Activated B cell treated with CpG ODN at 0.5 μM for 24 hours (primary cell): ENCODE measurements at regions of chr11 and their contacts with region 1.

Region 1: GRCh38 chr11:9748361-9748970 is 84.6 kb downstream of the SWAP70 start:
- DNase-seq: peak; percentile 46
- ATAC-seq: peak; percentile 83
- H3K4me3 Mint-ChIP-seq: peak overlapping the region; percentile 53
- H3K27ac Mint-ChIP-seq: peak overlapping the region; percentile 77
- H3K4me1 Mint-ChIP-seq: peaks cover 65% of the 10 kb centered on the region
- H3K27me3 Mint-ChIP-seq: no peaks in the 10 kb centered on the region
- CTCF ChIP-seq: peak; percentile 76

Region 2: DNA sequence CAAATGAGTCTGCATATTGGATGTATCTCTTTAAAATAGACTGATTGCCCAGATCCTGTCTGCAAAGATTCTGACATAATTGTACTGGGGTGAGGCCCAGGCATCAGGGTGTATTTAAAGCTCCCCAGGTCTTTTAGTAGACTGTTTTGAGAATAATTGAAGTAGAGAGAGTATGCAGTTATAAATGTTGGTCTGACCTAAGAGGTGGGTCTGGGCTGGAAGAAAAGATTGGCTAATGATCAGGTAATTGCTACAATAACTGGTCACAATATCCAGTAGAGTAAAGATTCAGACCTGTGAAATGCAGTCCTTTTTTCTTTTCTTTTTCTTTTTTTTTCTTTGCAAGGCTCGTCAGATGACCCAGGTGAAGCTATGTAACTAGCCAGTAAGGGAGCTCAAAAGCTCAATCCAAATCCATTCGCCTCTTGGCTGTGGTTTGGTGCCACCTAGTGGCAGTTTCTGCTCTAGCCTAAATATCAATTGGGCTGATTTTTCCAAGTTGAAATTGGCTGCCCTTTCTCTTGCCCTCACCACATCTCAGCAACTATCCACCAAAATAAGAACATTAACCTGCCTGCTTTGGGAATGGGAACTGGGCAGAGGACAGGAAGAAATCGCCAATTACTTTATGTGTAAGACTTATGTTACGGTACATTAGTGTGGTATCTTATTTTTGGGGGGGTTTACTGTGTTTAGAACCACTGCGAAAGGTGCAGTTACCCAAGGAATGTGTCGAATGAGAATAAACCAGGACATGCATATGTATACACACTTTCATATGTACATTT is 241.8 kb before region 1 on chr11:
- CTCF ChIA-PET with region 1: interaction called, 27 read pairs
- POLR2A ChIA-PET with region 1: no interaction called
- intact Hi-C with region 1: no loop called
- DNase-seq: peak; percentile 42
- ATAC-seq: peak; percentile 80
- H3K4me3 Mint-ChIP-seq: no peak overlapping the region
- H3K27ac Mint-ChIP-seq: no peak overlapping the region
- H3K4me1 Mint-ChIP-seq: peaks cover 16% of the 10 kb centered on the region
- H3K27me3 Mint-ChIP-seq: no peaks in the 10 kb centered on the region
- CTCF ChIP-seq: peak; percentile 71

Region 3: DNA sequence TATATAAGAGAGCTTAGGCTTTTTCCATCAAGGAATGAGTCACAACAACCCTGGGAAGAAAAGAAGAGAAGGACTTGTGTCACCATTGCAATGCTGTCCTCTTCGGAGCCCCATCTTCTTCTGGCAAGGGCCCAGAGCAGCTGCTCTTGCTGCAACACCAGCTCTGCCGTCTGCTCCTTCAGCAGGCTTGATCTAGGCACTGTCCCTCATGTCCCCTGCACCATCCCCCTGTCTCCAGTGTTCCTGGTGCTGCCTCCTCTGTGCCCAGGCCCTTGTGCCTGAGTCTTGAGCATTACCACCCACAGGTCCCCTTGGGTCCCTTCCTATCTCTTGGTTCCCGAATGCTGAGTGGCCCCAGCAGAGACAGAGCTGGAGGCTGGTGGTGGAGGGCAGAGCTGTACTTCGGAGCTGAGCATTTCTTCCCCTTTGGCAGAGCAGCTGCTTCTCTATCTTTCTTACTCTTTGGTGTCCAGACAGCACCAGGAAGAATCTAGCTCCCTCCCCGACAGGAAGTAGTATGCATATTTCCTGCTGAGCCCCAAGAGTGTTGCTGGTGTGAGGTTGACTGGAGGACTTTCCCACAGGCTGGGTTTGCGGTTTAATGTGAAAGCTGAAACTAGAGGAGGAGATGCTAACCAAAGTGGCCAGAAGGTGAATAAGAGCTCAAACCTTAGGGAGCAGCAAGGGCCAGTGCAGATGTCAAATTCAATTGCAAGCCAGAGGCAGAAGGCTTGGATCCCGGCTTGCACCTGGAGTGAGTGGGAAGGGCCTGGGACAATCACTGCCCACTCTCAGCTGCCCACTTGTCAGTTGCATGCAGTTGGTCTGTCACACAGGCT is 147.2 kb before region 1 on chr11:
- CTCF ChIA-PET with region 1: interaction called, 27 read pairs
- POLR2A ChIA-PET with region 1: interaction called, 10 read pairs
- intact Hi-C with region 1: no loop called
- DNase-seq: peak; percentile 53
- ATAC-seq: peak; percentile 76
- H3K4me3 Mint-ChIP-seq: peak overlapping the region; percentile 85
- H3K27ac Mint-ChIP-seq: peak overlapping the region; percentile 96
- H3K4me1 Mint-ChIP-seq: peaks cover 59% of the 10 kb centered on the region
- H3K27me3 Mint-ChIP-seq: no peaks in the 10 kb centered on the region
- CTCF ChIP-seq: no peak

Region 4: GRCh38 chr11:9672288-9672916 is 76.1 kb before region 1 on chr11:
- CTCF ChIA-PET with region 1: interaction called, 9 read pairs
- POLR2A ChIA-PET with region 1: interaction called, 59 read pairs
- intact Hi-C with region 1: no loop called
- DNase-seq: no peak
- ATAC-seq: no peak
- H3K4me3 Mint-ChIP-seq: no peak overlapping the region
- H3K27ac Mint-ChIP-seq: peak overlapping the region; percentile 94
- H3K4me1 Mint-ChIP-seq: peaks cover 71% of the 10 kb centered on the region
- H3K27me3 Mint-ChIP-seq: no peaks in the 10 kb centered on the region
- CTCF ChIP-seq: no peak

Region 5: GRCh38 chr11:9693801-9694553 is 54.5 kb before region 1 on chr11:
- CTCF ChIA-PET with region 1: interaction called, 21 read pairs
- POLR2A ChIA-PET with region 1: interaction called, 9 read pairs
- intact Hi-C with region 1: loop called (anchors 2 kb)
- DNase-seq: no peak
- ATAC-seq: no peak
- H3K4me3 Mint-ChIP-seq: peak overlapping the region; percentile 68
- H3K27ac Mint-ChIP-seq: peak overlapping the region; percentile 94
- H3K4me1 Mint-ChIP-seq: peaks cover 77% of the 10 kb centered on the region
- H3K27me3 Mint-ChIP-seq: no peaks in the 10 kb centered on the region
- CTCF ChIP-seq: no peak

Region 6: DNA sequence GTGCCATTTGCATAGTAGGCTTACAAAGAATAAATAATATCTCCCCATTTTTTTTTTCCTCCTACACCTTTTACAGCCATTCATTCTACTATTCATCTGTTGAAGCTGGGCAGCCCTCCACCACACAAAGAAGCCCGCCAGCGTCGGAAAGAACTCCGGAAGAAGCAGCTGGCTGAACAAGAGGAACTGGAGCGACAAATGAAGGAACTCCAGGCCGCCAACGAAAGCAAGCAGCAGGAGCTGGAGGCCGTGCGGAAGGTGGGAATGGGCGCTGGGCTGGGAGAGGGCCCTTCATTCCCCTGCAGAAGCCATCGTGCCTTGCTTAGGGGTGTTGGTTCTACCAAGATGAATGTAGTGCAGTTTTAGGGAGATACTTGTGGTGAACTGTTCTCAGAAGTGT is 16.0 kb before region 1 on chr11:
- CTCF ChIA-PET with region 1: interaction called, 25 read pairs
- POLR2A ChIA-PET with region 1: interaction called, 13 read pairs
- intact Hi-C with region 1: loop called (anchors 1 kb)
- DNase-seq: no peak
- ATAC-seq: no peak
- H3K4me3 Mint-ChIP-seq: no peak overlapping the region
- H3K27ac Mint-ChIP-seq: peak overlapping the region; percentile 81
- H3K4me1 Mint-ChIP-seq: peaks cover 87% of the 10 kb centered on the region
- H3K27me3 Mint-ChIP-seq: no peaks in the 10 kb centered on the region
- CTCF ChIP-seq: no peak

Region 7: GRCh38 chr11:9861860-9862725 is 113.6 kb after region 1 on chr11:
- CTCF ChIA-PET with region 1: no interaction called
- POLR2A ChIA-PET with region 1: no interaction called
- intact Hi-C with region 1: no loop called
- DNase-seq: no peak
- ATAC-seq: peak; percentile 82
- H3K4me3 Mint-ChIP-seq: no peak overlapping the region
- H3K27ac Mint-ChIP-seq: no peak overlapping the region
- H3K4me1 Mint-ChIP-seq: peaks cover 31% of the 10 kb centered on the region
- H3K27me3 Mint-ChIP-seq: no peaks in the 10 kb centered on the region
- CTCF ChIP-seq: no peak

Region 8: DNA sequence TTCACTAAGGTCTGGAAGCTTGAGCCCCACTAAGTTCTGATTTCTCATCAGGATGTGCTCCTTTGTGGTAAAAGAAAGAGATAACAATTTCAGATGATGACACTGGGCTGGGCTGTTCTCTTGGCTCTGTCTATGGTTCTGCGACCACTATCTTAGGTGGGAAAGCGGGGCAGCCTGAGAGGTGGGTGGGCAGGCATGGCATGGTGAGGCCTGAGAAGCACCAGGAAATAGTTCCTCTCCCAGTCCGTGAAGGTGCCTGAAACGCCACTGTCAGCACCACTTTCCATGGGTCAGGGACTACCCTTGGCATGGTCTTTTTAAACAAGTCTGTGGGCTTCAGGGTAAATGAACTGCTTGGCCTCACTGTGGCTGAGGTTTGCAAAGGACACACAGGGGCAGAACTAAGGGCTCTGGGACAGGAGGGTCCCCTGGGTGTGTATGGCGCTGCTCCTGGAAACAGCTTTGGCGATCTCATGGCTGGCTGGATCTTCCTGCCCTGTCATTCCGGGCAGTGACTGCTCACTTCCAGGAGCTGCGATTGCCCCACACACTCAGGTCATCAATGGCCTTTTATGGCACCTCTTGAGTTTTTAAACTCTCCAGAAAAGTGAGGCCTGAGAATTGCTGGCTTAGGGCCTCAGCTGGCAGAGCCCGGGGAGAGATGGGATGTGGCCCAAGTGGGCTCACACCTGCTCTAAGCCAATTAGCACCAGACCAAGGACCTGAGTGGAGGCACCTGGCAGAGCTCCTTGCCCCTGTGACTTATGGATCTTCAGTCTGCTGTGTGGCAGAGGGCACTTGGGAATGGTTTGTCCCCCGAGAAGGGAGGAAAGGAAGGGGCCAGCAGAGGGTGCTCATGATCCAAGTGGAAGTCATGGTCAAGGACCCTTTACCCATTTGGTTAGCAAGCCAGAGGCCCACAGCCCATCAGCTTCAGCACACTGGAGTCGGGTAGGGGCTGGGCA is 875.6 kb after region 1 on chr11:
- CTCF ChIA-PET with region 1: no interaction called
- POLR2A ChIA-PET with region 1: no interaction called
- intact Hi-C with region 1: no loop called
- DNase-seq: no peak
- ATAC-seq: peak; percentile 9
- H3K4me3 Mint-ChIP-seq: no peak overlapping the region
- H3K27ac Mint-ChIP-seq: peak overlapping the region; percentile 95
- H3K4me1 Mint-ChIP-seq: peaks cover 77% of the 10 kb centered on the region
- H3K27me3 Mint-ChIP-seq: no peaks in the 10 kb centered on the region
- CTCF ChIP-seq: no peak